Left colon (tissue), 2 donors: ENCODE measurements at regions of chr3 and their contacts with region 1.

Region 1: GRCh38 chr3:157204880-157205279 is 44.9 kb upstream of the CCNL1 start:
- DNase-seq: no peak
- ATAC-seq: no peak

Region 2: DNA sequence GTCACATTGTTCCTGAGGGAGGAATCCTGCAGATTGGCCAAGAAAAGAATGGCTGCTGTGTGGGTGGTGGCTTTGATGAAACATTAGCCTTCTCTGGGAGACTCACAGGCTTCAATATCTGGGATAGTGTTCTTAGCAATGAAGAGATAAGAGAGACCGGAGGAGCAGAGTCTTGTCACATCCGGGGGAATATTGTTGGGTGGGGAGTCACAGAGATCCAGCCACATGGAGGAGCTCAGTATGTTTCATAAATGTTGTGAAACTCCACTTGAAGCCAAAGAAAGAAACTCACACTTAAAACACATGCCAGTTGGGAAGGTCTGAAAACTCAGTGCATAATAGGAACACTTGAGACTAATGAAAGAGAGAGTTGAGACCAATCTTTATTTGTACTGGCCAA is 237.8 kb after region 1 on chr3:
- intact Hi-C with region 1: loop called in 1 of 2 experiments (anchors 5 kb)
- DNase-seq: no peak
- ATAC-seq: no peak

Region 3: GRCh38 chr3:157493627-157494550 is 289.0 kb after region 1 on chr3:
- intact Hi-C with region 1: loop called in 1 of 2 experiments (anchors 5 kb)
- DNase-seq: no peak
- ATAC-seq: no peak

Region 4: DNA sequence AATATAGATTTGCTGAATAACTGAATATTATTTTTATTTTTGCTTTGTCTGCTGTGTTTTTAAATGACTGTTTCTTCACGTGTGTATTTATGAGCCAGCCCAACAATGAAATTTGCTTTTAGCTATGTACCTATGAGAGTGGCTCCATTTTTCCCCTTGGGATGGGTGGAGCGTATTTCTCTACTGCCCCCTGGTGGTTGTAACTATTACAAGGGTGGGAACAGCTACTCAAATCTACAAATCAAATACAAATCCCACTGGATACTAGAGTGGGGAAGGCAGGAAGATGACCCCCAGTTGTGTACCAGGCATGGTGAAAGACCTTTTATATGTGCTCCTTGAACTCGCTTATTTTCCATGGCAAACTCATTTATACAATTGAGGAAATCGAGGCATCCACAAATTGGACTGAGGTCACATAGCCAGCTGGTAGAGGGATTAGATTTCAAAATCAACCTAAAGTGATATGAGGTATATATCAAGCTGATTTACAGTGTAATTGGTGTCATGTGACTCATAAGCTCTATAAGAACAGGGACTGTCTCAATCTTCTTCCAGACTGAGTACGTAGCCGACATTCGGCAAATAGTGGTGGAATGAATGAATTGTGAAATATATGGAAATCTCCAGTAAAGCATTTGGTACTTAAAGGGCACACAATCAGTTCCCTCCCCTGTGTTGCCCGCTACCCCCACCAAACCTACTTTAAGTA is 367.8 kb after region 1 on chr3:
- intact Hi-C with region 1: no loop called
- DNase-seq: no peak
- ATAC-seq: peak; percentile 64